ENCODE measurements at regions of chr1 and their contacts with region 1.

Region 1: DNA sequence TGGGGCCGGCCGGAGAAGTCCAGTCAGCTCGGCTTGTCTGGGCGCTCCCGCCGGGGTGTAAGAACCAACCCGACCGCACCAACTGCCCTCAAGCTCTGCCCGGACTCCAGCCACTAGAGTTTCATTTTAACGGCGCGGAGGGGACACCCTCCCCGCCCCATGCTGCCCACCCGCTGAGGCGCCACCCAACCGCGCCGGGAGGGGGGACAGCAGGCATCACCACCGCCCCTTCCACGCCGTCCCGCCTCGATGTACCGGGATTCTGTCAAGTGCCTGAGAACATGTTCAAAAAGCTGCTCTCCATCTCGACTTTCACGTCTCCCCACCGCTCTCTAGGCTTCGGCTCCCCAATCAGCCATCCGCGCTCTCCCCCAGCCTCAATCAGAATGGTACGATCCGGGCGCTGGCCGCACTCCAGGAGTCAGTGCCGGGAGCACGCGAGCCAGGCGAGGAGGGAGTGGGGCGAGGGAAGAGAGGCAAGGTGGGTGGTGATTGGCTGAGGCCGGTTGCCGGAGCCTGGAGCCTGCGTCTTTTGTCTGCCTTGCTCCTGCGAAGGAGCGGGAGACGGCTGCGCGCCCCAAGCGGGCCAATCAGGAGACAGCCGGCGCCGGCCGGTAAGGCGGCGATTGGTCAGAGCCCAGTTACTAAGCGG is at the start of gene PIK3R3:
- DNase-seq: peak; percentile 92
- ATAC-seq: peak; percentile 91
- H3K4me3 ChIP-seq: peak within 1 kb of the TSS; percentile 91
- H3K27ac ChIP-seq: peak within 1 kb of the TSS; percentile 98
- H3K4me1 ChIP-seq: peaks cover 16% of the 10 kb centered on the region
- H3K27me3 ChIP-seq: no peaks in the 10 kb centered on the region
- CTCF ChIP-seq: no peak
- EP300 ChIP-seq: peak; percentile 16 to 41; a peak in 2 of 4 replicates
- POLR2A ChIP-seq: peak; percentile 99
- RAD21 ChIP-seq: no peak
- polyA plus RNA-seq, gene PIK3R3: 4.8 to 7.4 TPM

Region 2: DNA sequence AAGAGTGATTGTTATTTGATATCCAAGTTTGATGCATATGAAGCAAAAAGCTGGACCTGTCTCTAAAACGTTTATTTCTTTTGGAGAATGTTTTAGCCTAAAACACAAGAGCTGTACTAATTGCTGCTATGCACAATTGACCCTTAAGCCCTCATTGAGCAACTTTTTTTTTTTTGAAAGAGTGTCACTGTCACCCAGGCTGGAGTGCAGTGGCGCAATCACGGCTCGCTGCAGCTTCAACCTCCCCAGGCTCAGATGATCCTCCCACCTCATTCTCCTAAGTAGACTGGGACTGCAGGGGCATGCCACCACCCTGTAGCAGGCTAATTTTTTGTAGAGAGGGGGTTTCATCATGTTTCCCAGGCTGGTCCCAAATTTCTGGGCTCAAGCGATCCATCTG is 129.3 kb before region 1 on chr1:
- CTCF ChIA-PET with region 1: no interaction called
- POLR2A ChIA-PET with region 1: no interaction called
- RAD21 ChIA-PET with region 1: no interaction called
- SMC1A ChIA-PET with region 1: no interaction called
- in situ Hi-C with region 1: no loop called
- intact Hi-C with region 1: no loop called
- DNase-seq: no peak
- ATAC-seq: no peak
- H3K4me3 ChIP-seq: no peak overlapping the region
- H3K27ac ChIP-seq: no peak overlapping the region
- H3K4me1 ChIP-seq: no peaks in the 10 kb centered on the region
- H3K27me3 ChIP-seq: no peaks in the 10 kb centered on the region
- CTCF ChIP-seq: no peak
- EP300 ChIP-seq: no peak
- POLR2A ChIP-seq: no peak
- RAD21 ChIP-seq: no peak

Region 3: DNA sequence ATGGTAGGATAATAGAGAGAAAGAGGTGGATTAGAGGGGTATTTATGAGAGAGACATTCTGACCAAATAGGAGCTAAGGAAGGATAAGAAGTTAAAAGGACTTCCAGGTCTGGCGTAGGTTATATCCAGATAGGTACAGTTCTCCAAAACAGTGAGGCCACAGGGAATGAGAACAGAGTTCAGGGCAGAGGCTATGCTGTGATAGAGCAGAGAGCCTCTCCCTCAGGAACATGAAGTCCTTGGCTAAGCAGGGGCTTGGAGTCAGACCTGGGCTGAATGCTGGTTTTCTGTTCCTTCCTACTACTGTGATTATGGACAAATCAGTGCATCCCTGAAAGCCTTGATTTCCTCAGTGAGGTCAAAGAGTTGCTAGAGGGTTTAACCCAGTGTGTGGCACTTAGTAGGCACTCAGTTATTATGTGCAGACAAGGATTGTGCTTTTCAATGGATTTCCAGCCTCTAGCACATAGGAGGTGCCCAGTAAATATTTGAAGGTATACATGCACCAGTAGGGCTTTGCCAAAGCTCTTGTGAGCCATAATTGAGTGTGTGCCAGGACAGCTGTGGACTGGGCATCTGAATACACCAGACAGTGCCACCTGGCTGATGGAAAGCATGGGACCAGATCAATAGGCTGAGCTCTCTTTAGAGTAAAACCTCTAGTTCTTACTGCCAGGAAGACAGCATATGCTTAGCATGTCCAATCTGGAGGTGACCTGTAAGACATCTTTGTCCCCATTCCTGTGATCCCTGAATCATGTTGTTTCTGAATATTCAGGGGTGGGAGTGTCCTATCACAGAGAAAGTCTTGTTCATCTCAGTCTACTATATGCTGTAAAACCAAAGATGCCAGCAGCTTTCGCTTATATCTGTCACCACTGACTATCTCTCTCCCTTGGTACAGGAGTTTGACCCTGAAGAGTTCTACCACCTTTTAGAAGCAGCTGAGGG is 111.3 kb before region 1 on chr1:
- CTCF ChIA-PET with region 1: no interaction called
- POLR2A ChIA-PET with region 1: no interaction called
- RAD21 ChIA-PET with region 1: no interaction called
- SMC1A ChIA-PET with region 1: no interaction called
- in situ Hi-C with region 1: no loop called
- intact Hi-C with region 1: no loop called
- DNase-seq: no peak
- ATAC-seq: no peak
- H3K4me3 ChIP-seq: no peak overlapping the region
- H3K27ac ChIP-seq: no peak overlapping the region
- H3K4me1 ChIP-seq: no peaks in the 10 kb centered on the region
- H3K27me3 ChIP-seq: no peaks in the 10 kb centered on the region
- CTCF ChIP-seq: no peak
- EP300 ChIP-seq: no peak
- POLR2A ChIP-seq: no peak
- RAD21 ChIP-seq: no peak

Region 4: DNA sequence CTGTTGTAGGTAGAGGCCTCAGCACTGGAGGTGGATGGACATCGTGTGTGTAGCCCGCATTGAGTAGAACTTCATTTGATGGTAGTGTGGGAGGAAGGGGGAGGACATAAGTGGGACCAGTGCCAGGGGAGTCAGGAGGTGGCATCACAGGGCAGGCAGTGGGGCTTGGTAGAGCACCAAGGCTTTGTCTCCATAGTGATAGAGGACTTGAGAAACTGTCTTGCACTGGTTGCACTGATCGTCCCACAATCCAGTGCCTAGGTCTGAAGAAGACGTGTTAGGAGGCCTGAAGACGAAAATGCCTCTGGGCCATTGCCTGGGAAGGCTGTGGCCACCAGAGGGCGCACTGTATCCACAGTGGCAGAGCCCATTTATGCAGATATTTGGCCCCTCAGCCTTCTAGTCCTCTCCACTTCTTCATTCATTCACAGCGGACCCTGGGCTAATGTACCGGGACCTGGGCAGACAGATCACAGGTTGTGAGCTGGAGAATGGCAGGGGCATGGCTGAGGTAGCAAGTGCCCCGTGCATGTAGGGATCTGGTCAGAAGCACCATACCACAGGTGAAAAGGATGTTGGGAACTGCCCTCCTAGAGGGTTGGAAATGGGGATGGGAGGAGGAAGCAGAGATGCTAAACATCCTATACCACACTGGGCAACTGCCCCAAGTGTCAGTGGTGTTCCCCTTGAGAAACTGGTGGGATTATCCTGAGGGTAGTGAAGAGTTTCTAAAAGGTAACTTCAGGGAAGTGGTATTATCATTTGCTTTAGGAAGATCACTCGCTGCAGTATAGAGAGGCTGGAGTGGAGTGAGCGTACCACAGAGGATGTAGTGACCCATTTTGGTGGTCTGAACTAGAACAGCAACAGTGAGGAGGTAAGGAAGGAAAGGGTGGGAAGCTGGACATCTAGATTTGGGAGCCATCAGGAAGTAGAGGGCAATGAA is 95.5 kb before region 1 on chr1:
- CTCF ChIA-PET with region 1: interaction called, 5 read pairs
- POLR2A ChIA-PET with region 1: interaction called, 5 read pairs
- RAD21 ChIA-PET with region 1: interaction called, 5 read pairs
- SMC1A ChIA-PET with region 1: interaction called, 37 read pairs
- in situ Hi-C with region 1: no loop called
- intact Hi-C with region 1: loop called (anchors 1 kb)
- DNase-seq: peak; percentile 53
- ATAC-seq: peak; percentile 91
- H3K4me3 ChIP-seq: no peak overlapping the region
- H3K27ac ChIP-seq: no peak overlapping the region
- H3K4me1 ChIP-seq: peaks cover 13% of the 10 kb centered on the region
- H3K27me3 ChIP-seq: no peaks in the 10 kb centered on the region
- CTCF ChIP-seq: peak; percentile 97 to 98 (median 98); a peak in 5 of 6 replicates
- EP300 ChIP-seq: no peak
- POLR2A ChIP-seq: peak; percentile 30; the same call in 1 of the 2 replicates
- RAD21 ChIP-seq: peak; percentile 100

Region 5: GRCh38 chr1:46062651-46063319 is 69.9 kb before region 1 on chr1:
- CTCF ChIA-PET with region 1: interaction called, 10 read pairs
- POLR2A ChIA-PET with region 1: interaction called, 8 read pairs
- RAD21 ChIA-PET with region 1: interaction called, 11 read pairs
- SMC1A ChIA-PET with region 1: interaction called, 17 read pairs
- in situ Hi-C with region 1: no loop called
- intact Hi-C with region 1: loop called (anchors 5 kb)
- DNase-seq: peak; percentile 51
- ATAC-seq: peak; percentile 86
- H3K4me3 ChIP-seq: no peak overlapping the region
- H3K27ac ChIP-seq: peak overlapping the region; percentile 3
- H3K4me1 ChIP-seq: peaks cover 9% of the 10 kb centered on the region
- H3K27me3 ChIP-seq: no peaks in the 10 kb centered on the region
- CTCF ChIP-seq: no peak
- EP300 ChIP-seq: 0 out of 4 replicates have a peak, but pooled peaks of 1 of the 2 experiments have one; percentile 32
- POLR2A ChIP-seq: no peak
- RAD21 ChIP-seq: no peak

Region 6: GRCh38 chr1:46158312-46159281 is 25.9 kb after region 1 on chr1:
- CTCF ChIA-PET with region 1: interaction called, 4 read pairs
- POLR2A ChIA-PET with region 1: interaction called, 3 read pairs
- RAD21 ChIA-PET with region 1: interaction called, 13 read pairs
- SMC1A ChIA-PET with region 1: interaction called, 20 read pairs
- in situ Hi-C with region 1: no loop called
- intact Hi-C with region 1: no loop called
- DNase-seq: no peak
- ATAC-seq: peak; percentile 66
- H3K4me3 ChIP-seq: no peak overlapping the region
- H3K27ac ChIP-seq: no peak overlapping the region
- H3K4me1 ChIP-seq: peaks cover 10% of the 10 kb centered on the region
- H3K27me3 ChIP-seq: no peaks in the 10 kb centered on the region
- CTCF ChIP-seq: no peak
- EP300 ChIP-seq: no peak
- POLR2A ChIP-seq: no peak
- RAD21 ChIP-seq: no peak

Region 7: GRCh38 chr1:46179138-46180081 is 46.8 kb after region 1 on chr1:
- CTCF ChIA-PET with region 1: interaction called, 7 read pairs
- POLR2A ChIA-PET with region 1: interaction called, 7 read pairs
- RAD21 ChIA-PET with region 1: interaction called, 5 read pairs
- SMC1A ChIA-PET with region 1: interaction called, 6 read pairs
- in situ Hi-C with region 1: no loop called
- intact Hi-C with region 1: loop called (anchors 2 kb)
- DNase-seq: no peak
- ATAC-seq: peak; percentile 88
- H3K4me3 ChIP-seq: no peak overlapping the region
- H3K27ac ChIP-seq: no peak overlapping the region
- H3K4me1 ChIP-seq: peaks cover 18% of the 10 kb centered on the region
- H3K27me3 ChIP-seq: no peaks in the 10 kb centered on the region
- CTCF ChIP-seq: peak; percentile 88 to 94 (median 91); a peak in 5 of 6 replicates
- EP300 ChIP-seq: no peak
- POLR2A ChIP-seq: no peak
- RAD21 ChIP-seq: peak; percentile 99